ENCODE measurements at regions of chr1 and their contacts with region 1.

Region 1: GRCh38 chr1:235290740-235291502 is 37.1 kb downstream of the ARID4B start:
- DNase-seq: no peak
- ATAC-seq: no peak
- H3K4me3 ChIP-seq: no peak overlapping the region
- H3K4me3 Mint-ChIP-seq: peak overlapping the region in 1 of 10 donors; percentile 49
- H3K27ac ChIP-seq: no peak overlapping the region
- H3K27ac Mint-ChIP-seq: peak overlapping the region in 5 of 9 donors; percentile 19 to 56 (median 37)
- H3K4me1 ChIP-seq: peaks cover 37 to 47% of the 10 kb centered on the region in 2 donors
- H3K4me1 Mint-ChIP-seq: peaks cover 42 to 83% (median 74%) of the 10 kb centered on the region in 7 donors
- H3K27me3 ChIP-seq: no peaks in the 10 kb centered on the region
- H3K27me3 Mint-ChIP-seq: no peaks in the 10 kb centered on the region

Region 2: GRCh38 chr1:235304549-235305451 is 13.9 kb after region 1 on chr1:
- CTCF ChIA-PET with region 1: interaction called, 3 read pairs
- POLR2A ChIA-PET with region 1: interaction called, 4 read pairs
- intact Hi-C with region 1: loop called in 1 of 2 experiments (anchors 2 kb)
- DNase-seq: peak in 7 of 9 donors; percentile 26 to 68 (median 39)
- ATAC-seq: peak; percentile 88
- H3K4me3 ChIP-seq: peak overlapping the region; percentile 3
- H3K4me3 Mint-ChIP-seq: peak overlapping the region; percentile 48 to 74 (median 58)
- H3K27ac ChIP-seq: peak overlapping the region; percentile 71
- H3K27ac Mint-ChIP-seq: peak overlapping the region; percentile 28 to 93 (median 79)
- H3K4me1 ChIP-seq: peaks cover 41 to 43% of the 10 kb centered on the region in 2 donors
- H3K4me1 Mint-ChIP-seq: peaks cover 37 to 71% (median 51%) of the 10 kb centered on the region in 7 donors
- H3K27me3 ChIP-seq: no peaks in the 10 kb centered on the region
- H3K27me3 Mint-ChIP-seq: no peaks in the 10 kb centered on the region

Measured in naive thymus-derived CD4-positive, alpha-beta T cell (primary cell).